ENCODE measurements at regions of chr2 and their contacts with region 1.

Region 1: GRCh38 chr2:53202063-53202462 is 565.5 kb upstream of the CHAC2 start:
- DNase-seq: peak; percentile 59 to 96
- H3K4me3 ChIP-seq: 0 out of 2 replicates have a peak overlapping the region, but pooled peaks have one; percentile 12
- H3K27ac ChIP-seq: peak overlapping the region; percentile 42
- H3K4me1 ChIP-seq: peaks cover 13% of the 10 kb centered on the region
- H3K27me3 ChIP-seq: no peaks in the 10 kb centered on the region
- CTCF ChIP-seq: peak; percentile 68

Region 2: GRCh38 chr2:52904355-52904891 is 297.6 kb before region 1 on chr2:
- CTCF ChIA-PET with region 1: no interaction called
- POLR2A ChIA-PET with region 1: no interaction called
- intact Hi-C with region 1: loop called (anchors 10 kb)
- DNase-seq: peak; percentile 25 to 77
- H3K4me3 ChIP-seq: no peak overlapping the region
- H3K27ac ChIP-seq: peak overlapping the region; percentile 45
- H3K4me1 ChIP-seq: peaks cover 19% of the 10 kb centered on the region
- H3K27me3 ChIP-seq: no peaks in the 10 kb centered on the region
- CTCF ChIP-seq: no peak

Region 3: GRCh38 chr2:53129851-53130250 is 72.2 kb before region 1 on chr2:
- CTCF ChIA-PET with region 1: no interaction called
- POLR2A ChIA-PET with region 1: no interaction called
- intact Hi-C with region 1: loop called (anchors 1 kb)
- DNase-seq: peak; percentile 41 to 78
- H3K4me3 ChIP-seq: no peak overlapping the region
- H3K27ac ChIP-seq: peak overlapping the region; percentile 29; the same call in 1 of the 2 replicates
- H3K4me1 ChIP-seq: peaks cover 28% of the 10 kb centered on the region
- H3K27me3 ChIP-seq: no peaks in the 10 kb centered on the region
- CTCF ChIP-seq: no peak

Region 4: DNA sequence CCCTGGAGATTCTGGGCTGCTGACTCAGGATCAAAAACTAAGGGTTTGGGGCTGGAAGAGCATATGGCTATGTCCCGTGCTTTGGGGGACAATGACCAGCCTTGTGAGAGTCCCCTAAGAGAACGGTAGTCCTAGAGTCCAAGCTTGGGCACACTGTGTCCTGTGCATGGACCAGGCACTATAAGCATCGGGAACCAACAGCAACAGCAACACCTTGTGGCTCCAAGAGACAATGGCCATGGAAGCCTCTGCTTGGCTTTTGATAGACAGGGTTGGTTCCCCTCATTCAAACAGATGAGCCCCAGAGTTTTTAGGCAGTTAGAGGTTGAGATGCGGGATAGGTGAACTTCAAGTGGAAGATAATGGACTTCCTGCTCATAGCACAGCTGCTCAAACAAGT is 271.2 kb after region 1 on chr2:
- CTCF ChIA-PET with region 1: no interaction called
- POLR2A ChIA-PET with region 1: no interaction called
- intact Hi-C with region 1: loop called (anchors 10 kb)
- DNase-seq: no peak
- H3K4me3 ChIP-seq: no peak overlapping the region
- H3K27ac ChIP-seq: no peak overlapping the region
- H3K4me1 ChIP-seq: peaks cover 43% of the 10 kb centered on the region
- H3K27me3 ChIP-seq: no peaks in the 10 kb centered on the region
- CTCF ChIP-seq: 0 out of 2 replicates have a peak, but pooled peaks have one; percentile 22

Region 5: GRCh38 chr2:53568469-53568868 is 366.4 kb after region 1 on chr2:
- CTCF ChIA-PET with region 1: no interaction called
- POLR2A ChIA-PET with region 1: no interaction called
- intact Hi-C with region 1: no loop called
- DNase-seq: no peak
- H3K4me3 ChIP-seq: no peak overlapping the region
- H3K27ac ChIP-seq: no peak overlapping the region
- H3K4me1 ChIP-seq: no peaks in the 10 kb centered on the region
- H3K27me3 ChIP-seq: no peaks in the 10 kb centered on the region
- CTCF ChIP-seq: no peak

Region 6: DNA sequence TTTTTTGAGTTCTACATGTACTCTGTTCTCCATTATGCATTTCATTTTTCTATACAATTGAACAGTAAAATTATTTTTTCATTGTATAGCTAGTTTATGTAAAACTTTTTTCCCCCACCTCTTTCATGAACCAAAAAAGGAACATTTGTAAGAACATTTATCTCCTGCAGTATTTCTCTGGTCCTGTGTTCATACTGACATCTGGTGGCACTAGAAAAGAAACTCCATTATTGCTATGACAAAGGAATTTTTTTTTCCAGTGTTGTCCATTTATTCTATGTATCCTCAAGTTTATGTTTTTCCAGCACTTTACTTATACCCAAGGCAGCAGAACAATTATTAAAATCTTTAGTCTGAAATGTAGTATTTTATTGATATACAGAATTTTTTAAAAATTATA is 538.1 kb after region 1 on chr2:
- CTCF ChIA-PET with region 1: no interaction called
- POLR2A ChIA-PET with region 1: no interaction called
- intact Hi-C with region 1: loop called (anchors 10 kb)
- DNase-seq: peak in 1 of 2 experiments; percentile 46
- H3K4me3 ChIP-seq: no peak overlapping the region
- H3K27ac ChIP-seq: no peak overlapping the region
- H3K4me1 ChIP-seq: no peaks in the 10 kb centered on the region
- H3K27me3 ChIP-seq: no peaks in the 10 kb centered on the region
- CTCF ChIP-seq: peak; percentile 75